ENCODE measurements at regions of chr14 and their contacts with region 1.

Region 1: GRCh38 chr14:55579724-55580469 is at the start of gene KTN1:
- DNase-seq: peak; percentile 82
- H3K4me3 Mint-ChIP-seq: peak within 1 kb of the TSS; percentile 93
- H3K27ac Mint-ChIP-seq: peak within 1 kb of the TSS; percentile 92
- H3K4me1 Mint-ChIP-seq: peaks cover 29% of the 10 kb centered on the region
- H3K27me3 Mint-ChIP-seq: no peaks in the 10 kb centered on the region
- total RNA-seq, gene KTN1: 123 and 135 TPM in 2 replicates

Region 2: DNA sequence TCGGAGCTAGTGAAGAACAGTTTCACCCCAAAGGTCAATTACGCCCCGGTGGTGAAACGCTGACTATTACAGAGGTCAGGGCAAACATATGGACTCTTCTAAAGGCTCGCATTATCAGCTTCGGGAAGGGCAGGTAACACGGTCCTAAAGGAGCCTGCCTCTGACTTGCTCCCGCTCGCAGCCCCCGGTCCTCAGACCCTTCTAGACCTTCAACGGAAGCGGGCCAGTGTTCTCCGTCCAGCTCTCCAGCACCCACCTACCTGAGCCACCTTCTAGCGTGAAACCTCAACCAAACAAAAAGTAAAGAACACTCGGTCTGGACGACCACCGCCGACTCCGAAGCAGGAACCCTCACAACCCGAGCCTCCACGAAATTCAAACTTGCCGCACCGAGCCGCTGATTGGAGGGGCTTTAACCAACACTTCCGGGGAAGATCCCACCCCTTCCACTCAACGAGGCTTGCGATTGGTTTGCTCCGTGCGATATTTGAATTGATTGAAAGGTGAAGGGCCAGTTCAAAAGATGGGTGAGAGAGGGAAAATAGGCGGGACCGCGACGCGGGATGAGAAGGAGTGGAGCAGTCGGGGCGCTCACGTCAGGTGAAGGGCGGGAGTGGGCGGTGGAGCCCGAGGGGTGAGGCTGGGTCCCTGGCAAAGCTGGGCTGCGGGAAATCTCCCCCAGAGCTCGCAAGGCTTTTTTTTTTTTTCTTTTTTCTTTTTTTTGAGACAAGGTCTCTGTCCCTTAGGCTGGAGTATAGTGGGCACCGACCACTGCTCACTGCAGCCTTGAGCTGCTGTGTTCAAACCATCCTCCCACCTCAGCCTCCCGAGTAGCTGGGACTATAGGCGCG is 388.5 kb before region 1 on chr14 and contains the start of gene DLGAP5:
- intact Hi-C with region 1: loop called (anchors 1 kb)
- DNase-seq: peak; percentile 91
- H3K4me3 Mint-ChIP-seq: peak within 1 kb of the TSS; percentile 94
- H3K27ac Mint-ChIP-seq: peak within 1 kb of the TSS; percentile 66
- H3K4me1 Mint-ChIP-seq: peaks cover 43% of the 10 kb centered on the region
- H3K27me3 Mint-ChIP-seq: no peaks in the 10 kb centered on the region
- total RNA-seq, gene DLGAP5: 22.4 and 26.4 TPM in 2 replicates

Region 3: DNA sequence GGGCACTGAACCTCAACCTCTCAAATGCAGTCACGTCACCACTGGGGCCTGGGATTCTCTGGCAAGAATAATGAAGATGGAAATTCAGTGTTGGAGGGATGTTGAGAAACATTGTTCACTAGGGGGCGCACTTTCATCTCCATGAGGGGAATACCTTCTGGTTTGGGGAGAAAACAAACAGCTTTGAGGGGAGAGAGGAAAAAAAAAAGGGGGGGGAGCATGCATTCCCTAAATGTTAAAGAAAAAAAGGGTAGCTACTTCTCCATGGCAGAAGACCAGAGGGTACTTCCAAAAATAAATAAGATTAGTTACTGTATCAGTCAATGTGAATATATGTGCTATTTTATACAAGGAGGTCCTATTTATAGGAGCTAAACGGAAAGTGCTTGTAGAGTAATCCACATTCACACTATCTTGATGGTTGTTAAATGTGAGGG is 133.7 kb before region 1 on chr14:
- intact Hi-C with region 1: loop called (anchors 2 kb)
- DNase-seq: peak; percentile 28
- H3K4me3 Mint-ChIP-seq: no peak overlapping the region
- H3K27ac Mint-ChIP-seq: no peak overlapping the region
- H3K4me1 Mint-ChIP-seq: peaks cover 18% of the 10 kb centered on the region
- H3K27me3 Mint-ChIP-seq: no peaks in the 10 kb centered on the region

Region 4: GRCh38 chr14:55556929-55557623 is 22.8 kb before region 1 on chr14:
- intact Hi-C with region 1: no loop called
- DNase-seq: no peak
- H3K4me3 Mint-ChIP-seq: no peak overlapping the region
- H3K27ac Mint-ChIP-seq: no peak overlapping the region
- H3K4me1 Mint-ChIP-seq: no peaks in the 10 kb centered on the region
- H3K27me3 Mint-ChIP-seq: no peaks in the 10 kb centered on the region

Region 5: DNA sequence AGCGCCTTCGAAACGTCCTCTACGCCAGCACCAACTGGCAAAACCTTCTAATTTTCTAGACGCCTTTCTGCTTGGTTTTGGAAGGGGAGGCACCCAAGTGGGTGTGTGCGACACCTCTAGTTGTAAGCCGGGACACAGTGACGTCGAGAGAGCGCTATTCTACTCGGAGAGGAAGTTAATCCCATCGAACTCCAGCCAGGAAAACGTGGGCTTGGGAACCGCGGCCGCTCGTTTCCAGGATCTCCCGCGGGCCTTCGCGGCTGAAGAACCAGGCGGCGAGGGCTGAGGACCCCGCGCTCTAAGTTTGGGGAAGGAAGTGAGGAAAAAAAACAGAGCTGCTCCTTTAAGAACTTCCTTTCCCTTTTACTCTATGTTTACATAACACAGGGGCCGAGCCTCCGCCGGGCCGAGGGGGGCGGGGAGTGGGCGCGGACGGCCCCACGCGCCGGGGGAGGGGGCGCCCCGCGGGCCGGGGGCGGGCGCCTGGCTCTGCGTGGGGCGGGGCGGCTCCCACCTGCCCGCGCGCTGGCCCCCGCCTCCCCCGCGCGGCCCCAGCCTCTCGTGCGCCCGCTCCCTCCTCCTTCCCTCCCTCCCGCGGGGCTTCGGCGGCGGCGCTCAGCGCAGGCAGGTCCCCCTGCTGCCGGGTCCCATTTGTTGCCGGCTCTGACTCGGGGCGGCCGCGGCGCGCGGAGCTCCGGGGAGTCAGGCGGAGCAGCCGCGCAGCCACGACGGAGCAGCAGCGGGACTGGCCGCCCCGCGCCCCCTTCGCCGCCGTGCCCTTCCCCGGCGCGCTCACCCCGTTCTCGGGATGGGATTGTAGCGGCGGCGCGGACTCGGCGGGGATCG is 538.1 kb after region 1 on chr14 and contains the start of gene PELI2:
- intact Hi-C with region 1: loop called (anchors 2 kb)
- DNase-seq: peak; percentile 78
- H3K4me3 Mint-ChIP-seq: peak within 1 kb of the TSS; percentile 93
- H3K27ac Mint-ChIP-seq: peak within 1 kb of the TSS; percentile 85
- H3K4me1 Mint-ChIP-seq: peaks cover 41% of the 10 kb centered on the region
- H3K27me3 Mint-ChIP-seq: peaks cover 39% of the 10 kb centered on the region
- total RNA-seq, gene PELI2: 4.4 and 4.5 TPM in 2 replicates

Region 6: GRCh38 chr14:57268161-57269069 is 1688.5 kb after region 1 on chr14 and contains the starts of genes AP5M1 and EXOC5:
- intact Hi-C with region 1: loop called (anchors 1 kb)
- DNase-seq: peak; percentile 92
- H3K4me3 Mint-ChIP-seq: peak within 1 kb of the TSS; percentile 99
- H3K27ac Mint-ChIP-seq: peak within 1 kb of the TSS; percentile 100
- H3K4me1 Mint-ChIP-seq: peaks cover 60% of the 10 kb centered on the region
- H3K27me3 Mint-ChIP-seq: no peaks in the 10 kb centered on the region
- total RNA-seq, gene AP5M1: 38.7 and 48.2 TPM in 2 replicates
- total RNA-seq, gene EXOC5: 75.9 and 76.6 TPM in 2 replicates

Measured in activated T-helper 1 cell treated with anti-CD3 and anti-CD28 coated beads, Interleukin-12 subunit alpha, Interleukin-12 subunit beta, Interleukin-2, Interleukin-4 antibody, amounts not matched to agents 30 ng/mL and 10 ng/mL and 1 ng/mL, durations not matched to agents 14 hours and 24 hours and 36 hours (primary cell).